ENCODE measurements at regions of chr14 and their contacts with region 1.

Region 1: GRCh38 chr14:75293920-75294642 is 15.5 kb downstream of the FOS start:
- DNase-seq: peak; percentile 91
- H3K4me3 Mint-ChIP-seq: peak overlapping the region; percentile 80
- H3K27ac Mint-ChIP-seq: no peak overlapping the region
- H3K4me1 Mint-ChIP-seq: peaks cover 20% of the 10 kb centered on the region
- H3K27me3 Mint-ChIP-seq: peaks cover 3% of the 10 kb centered on the region

Region 2: GRCh38 chr14:73564889-73565288 is 1729.2 kb before region 1 on chr14:
- CTCF ChIA-PET with region 1: no interaction called
- intact Hi-C with region 1: no loop called
- DNase-seq: no peak
- H3K4me3 Mint-ChIP-seq: no peak overlapping the region
- H3K27ac Mint-ChIP-seq: no peak overlapping the region
- H3K4me1 Mint-ChIP-seq: peaks cover 36% of the 10 kb centered on the region
- H3K27me3 Mint-ChIP-seq: no peaks in the 10 kb centered on the region

Region 3: GRCh38 chr14:75126679-75127473 is 167.2 kb before region 1 on chr14 and contains the start of gene NEK9:
- CTCF ChIA-PET with region 1: interaction called, 65 read pairs
- intact Hi-C with region 1: loop called (anchors 1 kb)
- DNase-seq: peak; percentile 92
- H3K4me3 Mint-ChIP-seq: peak within 1 kb of the TSS; percentile 96
- H3K27ac Mint-ChIP-seq: peak within 1 kb of the TSS; percentile 97
- H3K4me1 Mint-ChIP-seq: peaks cover 40% of the 10 kb centered on the region
- H3K27me3 Mint-ChIP-seq: no peaks in the 10 kb centered on the region
- total RNA-seq, gene NEK9: 53.5 to 55.6 TPM

Region 4: DNA sequence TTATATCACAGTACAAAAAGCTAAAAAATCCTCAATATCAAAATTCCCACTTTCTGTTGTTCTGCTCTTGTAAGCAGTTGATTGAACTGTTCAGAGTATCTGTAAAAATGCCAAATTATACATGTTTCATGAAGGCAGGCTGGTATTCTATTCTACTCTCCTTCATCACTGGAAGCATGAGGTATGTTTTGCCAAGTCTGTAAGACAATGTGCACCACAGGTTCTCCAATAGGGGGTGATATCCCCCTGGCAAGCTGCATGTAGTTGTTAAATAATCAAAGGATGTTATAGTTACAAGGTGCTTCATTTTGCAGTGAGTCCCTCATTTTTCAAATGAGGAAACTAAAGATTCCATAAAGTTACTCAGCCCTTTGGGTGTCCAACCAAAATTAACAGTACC is 152.1 kb before region 1 on chr14:
- CTCF ChIA-PET with region 1: interaction called, 78 read pairs
- intact Hi-C with region 1: loop called (anchors 1 kb)
- DNase-seq: peak; percentile 51
- H3K4me3 Mint-ChIP-seq: no peak overlapping the region
- H3K27ac Mint-ChIP-seq: no peak overlapping the region
- H3K4me1 Mint-ChIP-seq: peaks cover 62% of the 10 kb centered on the region
- H3K27me3 Mint-ChIP-seq: no peaks in the 10 kb centered on the region

Region 5: GRCh38 chr14:75258615-75259466 is 35.2 kb before region 1 on chr14:
- CTCF ChIA-PET with region 1: no interaction called
- intact Hi-C with region 1: loop called (anchors 1 kb)
- DNase-seq: peak; percentile 99
- H3K4me3 Mint-ChIP-seq: peak overlapping the region; percentile 77
- H3K27ac Mint-ChIP-seq: peak overlapping the region; percentile 77
- H3K4me1 Mint-ChIP-seq: peaks cover 18% of the 10 kb centered on the region
- H3K27me3 Mint-ChIP-seq: no peaks in the 10 kb centered on the region